WTC11 (cell line): ENCODE measurements at regions of chr5 and their contacts with region 1.

Region 1: DNA sequence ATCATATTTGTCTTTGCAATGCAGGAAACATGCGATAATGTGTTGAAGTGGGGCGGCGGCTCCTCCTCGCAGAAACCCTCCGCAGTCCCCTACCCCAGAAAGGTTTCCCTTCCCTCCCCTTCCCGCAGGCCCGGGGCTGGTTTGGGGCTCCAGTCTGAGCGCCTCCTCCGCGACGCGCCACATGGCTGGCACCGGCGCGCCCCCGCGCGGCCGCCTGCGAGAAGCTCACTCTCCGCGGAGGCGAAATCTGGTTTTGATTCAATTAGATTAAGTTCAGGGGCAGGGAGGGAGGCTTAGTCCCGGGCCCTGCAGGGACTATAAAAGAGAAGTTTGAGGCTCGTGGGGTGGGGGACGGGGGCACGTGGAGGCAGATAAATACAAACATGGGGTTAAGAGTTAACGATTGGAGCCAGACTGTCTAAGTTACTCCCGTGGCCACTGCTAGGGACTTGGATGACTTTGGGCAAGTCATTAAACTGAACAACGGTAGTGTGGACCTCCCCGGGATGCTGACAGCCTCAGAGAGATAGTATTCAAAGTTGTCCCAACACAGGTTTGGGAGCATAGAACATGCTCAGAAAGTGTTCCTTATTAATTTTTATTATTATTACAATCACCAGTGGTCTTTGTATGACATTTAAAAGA is 69.4 kb downstream of the MSX2 start:
- DNase-seq: peak; percentile 86
- ATAC-seq: peak; percentile 96
- H3K4me3 Mint-ChIP-seq: peak overlapping the region; percentile 31; the same call in 1 of the 2 replicates
- H3K27ac Mint-ChIP-seq: no peak overlapping the region
- H3K4me1 Mint-ChIP-seq: peaks cover 15% of the 10 kb centered on the region
- H3K27me3 Mint-ChIP-seq: peaks cover 13% of the 10 kb centered on the region
- CTCF ChIP-seq: peak; percentile 84

Region 2: DNA sequence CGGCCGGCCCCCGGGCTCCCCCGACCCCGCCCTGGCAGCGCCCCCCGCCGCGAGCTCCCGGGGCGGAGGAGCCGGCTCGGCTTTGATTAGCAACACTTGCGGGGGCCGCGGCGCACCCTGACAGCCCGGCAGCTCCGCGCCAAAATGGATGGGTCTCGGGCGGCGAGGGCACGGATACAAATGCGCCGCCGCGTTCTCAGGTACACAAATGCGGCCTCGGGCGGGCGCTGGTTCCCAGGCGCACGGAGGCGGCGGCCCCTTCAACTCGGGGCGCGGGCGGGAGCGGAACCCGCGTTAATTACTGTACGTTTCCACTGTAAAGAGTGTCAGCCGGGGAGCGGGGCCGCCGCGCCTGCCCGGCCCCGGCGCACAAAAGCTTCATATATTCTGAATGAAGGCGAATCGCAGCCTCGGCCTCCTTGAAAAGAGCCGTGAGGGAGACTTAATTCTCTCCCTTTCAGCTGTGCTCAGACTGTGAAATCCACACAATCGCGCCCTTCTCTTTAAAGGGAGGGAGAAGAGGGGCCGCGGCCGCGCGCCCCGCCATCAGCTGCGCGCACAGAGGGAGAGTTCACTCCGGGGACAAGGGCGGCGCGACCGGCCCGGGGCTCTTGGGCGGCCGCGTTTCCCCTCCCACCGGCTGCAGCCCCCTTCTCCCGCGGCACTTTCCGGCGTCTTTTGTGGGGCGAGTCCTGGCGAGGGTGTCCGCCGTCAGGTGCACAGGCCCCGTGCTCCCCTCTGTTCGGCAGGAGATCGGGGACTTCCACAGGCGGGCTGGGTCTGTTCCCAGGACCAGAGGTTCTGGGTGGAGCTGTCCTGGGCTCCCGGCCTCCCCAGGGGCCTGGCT is 42.4 kb before region 1 on chr5:
- CTCF ChIA-PET with region 1: interaction called, 13 read pairs
- POLR2A ChIA-PET with region 1: no interaction called
- DNase-seq: peak; percentile 59
- ATAC-seq: peak; percentile 71
- H3K4me3 Mint-ChIP-seq: peak overlapping the region; percentile 76
- H3K27ac Mint-ChIP-seq: no peak overlapping the region
- H3K4me1 Mint-ChIP-seq: peaks cover 3% of the 10 kb centered on the region
- H3K27me3 Mint-ChIP-seq: peaks cover 73% of the 10 kb centered on the region
- CTCF ChIP-seq: no peak

Region 3: DNA sequence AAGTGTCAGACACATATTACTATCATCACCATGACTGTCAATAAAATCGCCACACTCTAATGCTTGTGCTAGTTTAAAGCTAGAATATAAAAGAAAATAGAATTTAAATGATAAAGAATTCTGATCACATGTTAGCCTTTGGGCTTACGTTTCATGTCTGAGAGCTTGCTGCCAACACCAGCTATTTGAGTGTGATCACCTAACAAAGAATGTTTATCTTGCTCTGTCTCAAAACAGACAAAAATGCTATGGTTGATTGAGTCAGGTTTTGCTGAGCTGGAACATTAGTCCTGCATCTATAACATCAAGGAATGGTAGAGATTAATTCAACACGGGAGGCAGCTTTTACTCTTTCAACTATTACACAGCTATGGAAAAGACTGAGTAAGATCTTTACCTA is 18.7 kb before region 1 on chr5:
- CTCF ChIA-PET with region 1: interaction called, 10 read pairs
- POLR2A ChIA-PET with region 1: interaction called, 3 read pairs
- DNase-seq: no peak
- ATAC-seq: no peak
- H3K4me3 Mint-ChIP-seq: no peak overlapping the region
- H3K27ac Mint-ChIP-seq: no peak overlapping the region
- H3K4me1 Mint-ChIP-seq: no peaks in the 10 kb centered on the region
- H3K27me3 Mint-ChIP-seq: peaks cover 2% of the 10 kb centered on the region; the same call in 1 of the 2 replicates
- CTCF ChIP-seq: no peak